ENCODE measurements at regions of chr20 and their contacts with region 1.

Region 1: DNA sequence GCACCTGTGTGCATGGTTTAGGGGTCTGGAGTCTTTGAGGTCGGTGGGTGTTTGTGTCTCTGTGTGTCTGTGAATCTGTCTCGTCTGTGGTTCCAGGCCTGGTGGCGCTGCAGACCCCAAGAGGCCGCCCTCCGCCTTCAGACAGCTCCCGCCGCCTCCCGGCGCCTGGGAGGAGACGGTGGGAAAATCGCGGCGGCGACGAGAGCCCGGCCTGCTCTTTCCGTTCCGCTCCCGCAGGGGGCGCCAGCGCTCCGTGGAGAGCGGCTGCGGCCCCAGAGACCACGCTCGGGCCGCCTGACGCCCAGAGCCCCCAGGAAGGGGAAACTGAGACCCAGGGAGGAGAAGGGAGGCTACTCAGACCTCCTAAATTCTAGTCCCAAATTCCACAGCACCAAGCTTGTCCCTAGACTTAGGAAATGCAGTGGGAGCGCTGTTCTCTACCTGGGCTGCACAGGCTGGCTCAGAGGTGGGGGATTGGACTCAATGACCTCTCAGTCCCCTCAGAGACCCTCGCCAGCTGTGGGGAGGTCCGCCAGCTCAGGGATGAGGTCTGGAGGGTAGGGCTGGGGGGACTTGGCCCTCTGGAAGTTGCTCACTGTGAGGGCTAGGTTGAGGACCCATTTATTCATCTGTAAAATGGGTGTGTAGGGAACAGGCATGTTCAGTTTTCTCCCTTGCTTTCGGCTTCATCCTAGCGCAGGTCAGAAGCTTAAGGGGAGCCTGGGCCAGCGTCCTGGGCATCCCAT is 36.9 kb upstream of the BLCAP start:
- DNase-seq: no peak
- H3K4me3 ChIP-seq: no peak overlapping the region
- CTCF ChIP-seq: peak; percentile 97

Region 2: GRCh38 chr20:37519508-37520128 is 44.9 kb before region 1 on chr20:
- CTCF ChIA-PET with region 1: no interaction called
- POLR2A ChIA-PET with region 1: no interaction called
- DNase-seq: no peak
- H3K4me3 ChIP-seq: no peak overlapping the region
- CTCF ChIP-seq: peak; percentile 1

Region 3: DNA sequence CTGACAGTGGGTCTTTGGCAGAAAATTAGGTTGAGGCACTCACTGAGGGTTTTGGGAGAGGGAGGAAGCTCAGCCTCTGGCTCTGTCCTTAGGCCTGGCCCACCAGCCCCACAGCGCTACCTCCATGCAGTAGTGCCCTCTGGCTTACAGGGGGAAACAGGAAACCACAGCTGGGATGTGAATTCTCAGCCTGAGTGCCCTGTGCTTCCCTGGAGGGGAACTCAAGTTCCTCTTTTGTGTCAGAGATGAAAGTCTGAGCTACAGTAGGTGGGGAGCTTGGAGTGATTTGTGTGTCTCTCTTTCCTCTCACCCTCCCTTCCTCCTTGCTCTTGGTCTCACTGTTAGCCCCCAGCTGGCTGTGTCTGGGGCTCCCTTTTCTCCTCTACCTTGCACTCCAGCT is 11.3 kb after region 1 on chr20:
- CTCF ChIA-PET with region 1: interaction called, 19 read pairs
- POLR2A ChIA-PET with region 1: no interaction called
- DNase-seq: no peak
- H3K4me3 ChIP-seq: no peak overlapping the region
- CTCF ChIP-seq: no peak

Region 4: GRCh38 chr20:37990571-37991151 is 426.1 kb after region 1 on chr20:
- CTCF ChIA-PET with region 1: interaction called, 92 read pairs
- POLR2A ChIA-PET with region 1: no interaction called
- DNase-seq: no peak
- H3K4me3 ChIP-seq: no peak overlapping the region
- CTCF ChIP-seq: no peak

Region 5: DNA sequence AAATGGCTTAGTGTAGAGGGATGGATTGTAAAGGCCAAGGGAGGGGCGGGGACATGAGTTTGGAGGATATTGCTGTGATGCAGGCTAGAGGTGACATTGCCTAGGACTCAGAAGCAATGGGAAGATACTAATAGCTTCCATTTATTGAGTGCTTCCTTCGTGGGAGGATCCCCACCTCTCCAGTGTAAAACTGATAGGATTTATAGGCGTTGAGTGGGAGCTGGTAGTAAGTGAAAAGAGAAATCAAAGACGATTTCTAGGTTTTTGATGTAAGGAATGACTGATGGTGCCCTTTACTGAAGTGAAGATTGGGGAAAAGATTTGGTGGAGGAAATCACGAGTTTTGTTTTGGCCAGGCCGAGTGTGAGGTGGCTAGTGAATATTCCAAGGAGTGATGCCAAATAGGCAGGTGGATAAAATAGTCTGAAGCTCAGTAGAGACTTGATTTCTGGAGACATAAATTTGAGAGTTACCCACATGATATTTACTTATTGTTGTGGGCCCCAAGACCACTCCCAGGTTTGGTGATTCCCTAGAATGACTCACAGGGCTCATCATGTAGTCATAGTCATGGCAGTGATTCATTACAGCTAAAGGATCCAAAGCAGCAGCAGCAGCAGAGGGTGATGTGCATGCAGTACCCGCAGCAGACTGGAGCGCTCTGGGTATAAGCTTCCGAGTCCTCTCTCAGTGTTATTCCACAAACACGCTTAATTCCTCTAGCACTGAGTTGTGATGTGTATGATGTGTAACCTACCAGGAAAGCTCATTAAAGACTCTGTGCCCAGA is 479.1 kb after region 1 on chr20:
- CTCF ChIA-PET with region 1: interaction called, 12 read pairs
- POLR2A ChIA-PET with region 1: no interaction called
- DNase-seq: no peak
- H3K4me3 ChIP-seq: no peak overlapping the region
- CTCF ChIP-seq: peak; percentile 12

Region 6: DNA sequence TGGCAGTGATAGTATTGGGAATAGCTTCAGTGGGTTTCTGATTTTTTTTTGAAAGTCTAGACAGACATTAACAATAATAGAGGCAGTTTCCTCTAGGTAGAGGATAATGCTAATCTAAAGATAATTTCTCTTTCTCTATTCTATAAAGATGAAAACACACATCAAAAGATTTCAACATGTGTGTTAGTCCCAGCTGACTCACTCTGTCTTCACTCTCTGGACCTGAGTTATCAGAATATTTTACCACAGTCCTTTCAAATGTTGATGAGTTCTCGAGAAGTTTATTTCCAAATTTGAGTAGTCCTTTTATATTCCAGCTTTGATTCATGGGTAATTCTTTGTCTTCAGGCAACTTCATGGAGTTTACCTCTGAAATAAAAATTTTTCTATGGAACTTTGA is 486.1 kb after region 1 on chr20:
- CTCF ChIA-PET with region 1: interaction called, 52 read pairs
- POLR2A ChIA-PET with region 1: no interaction called
- DNase-seq: no peak
- H3K4me3 ChIP-seq: no peak overlapping the region
- CTCF ChIP-seq: no peak

Region 7: DNA sequence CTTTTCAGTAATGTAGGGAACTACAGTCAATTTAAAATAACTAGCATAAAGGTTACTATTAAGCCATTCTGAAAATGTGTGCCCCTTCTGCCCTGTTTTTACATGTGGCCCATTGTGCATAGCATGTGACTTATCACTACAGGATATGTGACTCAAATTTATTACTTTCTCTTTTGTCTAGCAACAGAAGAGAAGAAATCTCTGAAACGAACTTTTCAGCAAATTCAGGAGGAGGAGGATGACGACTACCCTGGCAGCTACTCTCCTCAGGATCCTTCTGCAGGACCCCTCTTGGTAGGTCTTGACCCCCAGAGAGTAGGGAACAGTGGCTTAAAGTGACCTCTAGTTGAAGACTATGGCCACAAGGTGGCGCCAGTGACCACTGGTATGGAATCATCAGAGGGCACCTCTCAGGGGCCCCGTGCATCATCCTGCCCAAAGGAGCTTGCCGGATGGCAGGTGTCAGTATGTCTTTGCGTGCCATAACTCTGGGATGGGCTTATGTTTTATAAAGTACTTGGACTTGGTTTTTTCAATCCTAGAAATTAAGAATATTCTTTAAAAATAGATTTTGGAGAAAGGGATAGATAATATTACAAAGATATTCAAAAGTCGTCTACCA is 492.9 kb after region 1 on chr20:
- CTCF ChIA-PET with region 1: interaction called, 52 read pairs
- POLR2A ChIA-PET with region 1: no interaction called
- DNase-seq: no peak
- H3K4me3 ChIP-seq: no peak overlapping the region
- CTCF ChIP-seq: peak; percentile 77

Region 8: DNA sequence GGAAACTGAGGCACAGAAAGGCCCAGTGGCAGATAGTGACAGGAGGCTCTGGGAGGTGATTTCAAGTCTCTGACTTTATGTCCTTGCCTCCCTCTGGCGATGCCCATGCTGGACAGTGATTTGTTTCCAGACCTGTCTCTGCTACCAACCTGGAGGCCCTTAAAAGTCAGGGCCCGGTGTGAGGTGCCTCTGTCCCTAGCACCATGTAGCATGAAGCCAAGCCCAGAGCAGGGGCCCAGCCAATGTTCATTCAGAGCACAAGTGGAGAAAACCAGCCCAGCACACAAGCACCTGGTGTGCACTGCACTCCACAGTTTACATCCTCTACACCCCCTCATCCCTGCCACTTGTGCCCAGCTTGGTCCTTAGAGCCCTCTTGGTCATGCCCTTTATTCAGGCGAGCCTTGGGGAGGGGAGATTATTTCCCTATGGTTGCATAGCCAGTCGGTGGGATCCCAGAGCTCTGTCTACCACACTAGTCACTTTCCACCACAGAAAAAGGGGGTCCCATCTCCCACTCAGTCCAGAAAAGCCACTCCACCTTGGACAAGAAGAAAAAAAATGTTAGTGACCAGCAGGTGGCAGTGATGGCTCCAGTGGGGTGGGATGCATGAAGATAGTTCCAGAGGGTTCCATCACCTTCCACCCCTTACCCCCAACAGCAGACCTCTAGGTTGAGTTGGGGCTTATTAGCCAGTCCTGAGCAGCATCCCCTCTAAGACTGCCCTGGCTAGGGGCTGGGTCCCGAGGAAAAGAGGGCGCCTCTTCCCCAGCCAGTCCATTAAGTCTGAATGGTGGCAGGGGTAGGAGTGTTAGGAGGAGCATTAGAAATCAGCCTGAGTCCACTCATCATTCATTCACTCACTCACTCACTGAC is 665.1 kb after region 1 on chr20:
- CTCF ChIA-PET with region 1: interaction called, 17 read pairs
- POLR2A ChIA-PET with region 1: no interaction called
- DNase-seq: no peak
- H3K4me3 ChIP-seq: no peak overlapping the region
- CTCF ChIP-seq: peak; percentile 60

Measured in AG04449 (cell line).